Prostate gland (tissue), 2 donors: ENCODE measurements at regions of chr4 and their contacts with region 1.

Region 1: DNA sequence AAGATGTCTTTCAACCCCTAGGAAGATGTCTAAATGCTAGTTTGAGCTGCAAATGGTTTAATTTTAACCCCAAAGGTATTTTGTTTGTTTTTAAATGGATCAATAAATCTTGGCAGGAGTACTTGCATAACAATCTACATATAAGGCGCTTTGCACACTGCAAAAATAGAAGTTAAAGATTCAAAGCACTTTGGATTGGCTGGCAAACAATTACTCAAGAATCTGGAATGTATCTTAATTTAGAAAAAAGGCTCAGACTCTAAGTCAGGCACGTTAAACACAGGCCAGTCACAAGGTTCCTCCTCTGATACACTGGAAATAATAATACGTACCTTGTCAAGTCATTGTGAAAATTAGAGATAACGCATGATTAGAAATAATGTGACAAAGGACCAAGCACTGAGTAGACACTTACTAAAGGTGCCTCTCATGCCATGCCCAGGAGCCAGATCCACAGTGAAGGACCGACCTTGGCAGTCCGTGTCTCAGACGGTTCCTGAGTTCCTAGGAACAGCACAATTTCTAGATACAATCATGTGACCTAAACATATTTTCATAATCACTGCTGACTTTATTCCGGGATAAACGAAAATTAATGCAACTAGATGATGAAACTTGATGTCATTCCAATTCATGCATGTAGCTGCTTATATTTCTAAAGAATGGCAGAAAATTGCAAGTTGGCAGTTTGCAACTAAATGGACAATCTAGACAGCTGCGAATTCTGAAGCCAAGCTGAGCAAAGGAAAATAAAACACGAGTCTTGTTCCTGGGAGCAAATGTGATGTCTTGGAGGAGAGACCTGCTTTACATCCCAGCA is 49.6 kb downstream of the PROM1 start:
- DNase-seq: no peak
- H3K4me3 ChIP-seq: no peak overlapping the region
- H3K27ac ChIP-seq: no peak overlapping the region
- H3K4me1 ChIP-seq: no peaks in the 10 kb centered on the region
- H3K27me3 ChIP-seq: no peaks in the 10 kb centered on the region
- CTCF ChIP-seq: no peak
- POLR2A ChIP-seq: no peak

Region 2: GRCh38 chr4:16082426-16083240 is 48.4 kb after region 1 on chr4:
- intact Hi-C with region 1: loop called (anchors 5 kb)
- DNase-seq: no peak
- H3K4me3 ChIP-seq: peak overlapping the region; percentile 26
- H3K27ac ChIP-seq: no peak overlapping the region
- H3K4me1 ChIP-seq: peaks cover 11% of the 10 kb centered on the region
- H3K27me3 ChIP-seq: peaks cover 10% of the 10 kb centered on the region
- CTCF ChIP-seq: no peak
- POLR2A ChIP-seq: no peak

Region 3: GRCh38 chr4:16199093-16199492 is 164.9 kb after region 1 on chr4:
- intact Hi-C with region 1: loop called (anchors 2 kb)
- DNase-seq: no peak
- H3K4me3 ChIP-seq: no peak overlapping the region
- H3K27ac ChIP-seq: no peak overlapping the region
- H3K4me1 ChIP-seq: no peaks in the 10 kb centered on the region
- H3K27me3 ChIP-seq: no peaks in the 10 kb centered on the region
- CTCF ChIP-seq: peak in 3 of 4 experiments; percentile 29 to 42 (median 31)
- POLR2A ChIP-seq: no peak

Region 4: GRCh38 chr4:17544205-17544604 is 1510.0 kb after region 1 on chr4:
- intact Hi-C with region 1: no loop called
- DNase-seq: no peak
- H3K4me3 ChIP-seq: no peak overlapping the region
- H3K27ac ChIP-seq: no peak overlapping the region
- H3K4me1 ChIP-seq: no peaks in the 10 kb centered on the region
- H3K27me3 ChIP-seq: no peaks in the 10 kb centered on the region
- CTCF ChIP-seq: no peak
- POLR2A ChIP-seq: no peak